Dendritic cell treated with granulocyte-macrophage colony-stimulating factor and Interleukin-4, amounts not matched to agents 40 ng/mL and 50 ng/mL, for 4 days (primary cell): ENCODE measurements at regions of chr14 and their contacts with region 1.

Region 1: DNA sequence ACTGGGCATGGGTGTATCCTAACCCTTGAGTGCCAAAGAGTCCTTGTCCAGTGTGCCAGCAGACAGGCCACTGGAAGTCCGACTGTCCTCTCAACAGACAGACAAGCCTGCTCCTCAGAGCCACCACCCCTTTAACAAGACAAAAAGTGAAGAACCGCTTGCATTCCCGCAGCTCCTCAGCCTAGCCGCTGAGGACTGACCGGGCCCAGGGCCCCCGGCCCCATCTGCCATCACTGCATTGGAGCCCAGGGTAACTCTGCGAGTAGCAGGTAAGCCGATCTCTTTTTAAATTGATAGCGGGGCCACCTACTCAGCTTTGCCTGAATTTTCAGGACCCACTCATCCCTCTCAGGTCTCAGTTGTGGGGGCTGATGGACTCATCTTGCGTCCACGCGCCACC is 68.9 kb downstream of the MOK start:
- H3K4me3 Mint-ChIP-seq: no peak overlapping the region
- H3K27ac Mint-ChIP-seq: no peak overlapping the region
- H3K4me1 Mint-ChIP-seq: no peaks in the 10 kb centered on the region
- H3K27me3 Mint-ChIP-seq: peaks cover 1% of the 10 kb centered on the region

Region 2: GRCh38 chr14:102187058-102187457 is 49.0 kb before region 1 on chr14:
- intact Hi-C with region 1: no loop called
- H3K4me3 Mint-ChIP-seq: no peak overlapping the region
- H3K27ac Mint-ChIP-seq: no peak overlapping the region
- H3K4me1 Mint-ChIP-seq: peaks cover 47% of the 10 kb centered on the region
- H3K27me3 Mint-ChIP-seq: no peaks in the 10 kb centered on the region

Region 3: DNA sequence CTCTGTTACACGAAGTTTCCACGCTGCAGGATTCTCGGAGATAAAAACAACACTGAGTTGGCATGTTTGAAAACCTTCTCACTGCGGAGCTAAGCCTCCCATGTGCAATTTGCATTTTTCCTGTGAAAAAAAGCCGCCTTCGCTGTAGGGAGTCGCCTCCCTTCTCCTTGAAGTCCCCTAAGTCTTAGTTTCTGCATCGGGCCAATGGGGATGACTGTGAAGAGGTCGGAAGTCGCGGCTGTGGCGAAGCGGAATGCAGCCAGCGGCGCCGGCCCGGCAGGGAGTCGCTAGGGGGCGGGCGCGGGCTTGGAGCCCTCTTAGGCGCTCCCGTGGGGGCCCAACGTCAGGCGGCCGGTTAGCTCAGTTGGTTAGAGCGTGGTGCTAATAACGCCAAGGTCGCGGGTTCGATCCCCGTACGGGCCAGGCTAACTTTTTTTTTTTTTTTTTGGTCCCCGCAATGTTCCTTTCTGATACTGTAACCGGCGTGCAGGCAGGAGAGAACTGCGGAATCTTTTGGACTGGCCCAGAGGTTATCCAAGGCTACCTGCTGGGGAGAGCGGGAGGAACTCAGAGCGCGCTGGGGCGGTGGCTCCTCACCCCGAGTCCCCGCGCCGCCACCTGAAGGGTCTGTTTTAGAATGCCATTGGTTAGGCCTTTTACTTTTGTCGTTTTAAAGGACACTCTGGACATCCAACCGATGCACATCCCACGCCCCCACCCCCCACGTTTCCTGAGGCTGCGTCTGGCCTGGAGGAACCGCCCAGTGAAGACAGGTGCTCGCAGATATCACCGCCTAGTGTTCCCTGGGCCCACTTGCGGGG is 80.9 kb after region 1 on chr14:
- intact Hi-C with region 1: loop called (anchors 2 kb)
- H3K4me3 Mint-ChIP-seq: peak overlapping the region; percentile 80
- H3K27ac Mint-ChIP-seq: peak overlapping the region; percentile 79
- H3K4me1 Mint-ChIP-seq: peaks cover 41% of the 10 kb centered on the region
- H3K27me3 Mint-ChIP-seq: peaks cover 12% of the 10 kb centered on the region